CD8-positive, alpha-beta T cell (primary cell): ENCODE measurements at regions of chr6 and their contacts with region 1.

Region 1: DNA sequence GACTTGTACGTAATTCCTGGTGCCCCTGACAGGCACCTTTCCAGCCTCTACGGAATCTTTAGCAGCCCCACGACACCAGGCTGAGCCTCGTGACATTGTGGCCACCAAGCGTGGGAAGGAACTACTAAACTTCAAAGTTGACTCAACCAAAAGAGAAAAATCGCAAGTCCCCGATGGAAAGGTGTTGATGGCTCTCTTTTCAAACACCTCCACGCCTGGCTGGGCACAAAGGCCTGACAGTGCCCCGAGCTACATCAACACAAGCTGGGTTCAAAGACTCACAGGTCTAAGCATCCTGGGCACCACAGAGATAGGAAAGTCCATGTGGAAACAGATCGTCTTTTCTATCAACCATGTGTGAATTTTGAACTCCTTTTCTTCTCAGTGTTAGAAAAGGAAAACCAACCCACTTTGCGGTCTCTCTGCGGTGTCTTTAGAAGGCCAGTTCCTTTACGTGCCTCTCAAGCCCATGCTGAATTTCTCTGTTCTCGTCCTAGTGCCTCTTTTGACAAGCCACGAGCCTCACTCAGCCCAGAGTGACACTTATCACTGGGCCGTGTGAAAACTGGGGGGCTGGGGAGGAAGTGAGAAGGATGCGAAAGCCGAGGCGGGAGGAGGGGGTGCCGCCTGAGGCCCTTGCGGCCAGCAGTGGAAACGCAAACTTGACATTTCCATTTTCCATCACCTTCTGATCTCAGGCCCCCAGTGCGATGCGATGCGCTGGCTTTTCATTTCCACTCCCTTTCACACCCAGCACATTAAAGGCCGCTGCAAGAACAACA is 59.4 kb downstream of the GFOD1 start:
- DNase-seq: peak; percentile 25 to 92 (median 68)
- ATAC-seq: peak; percentile 80
- H3K4me3 ChIP-seq: peak overlapping the region; percentile 1 to 19
- H3K4me3 Mint-ChIP-seq: peak overlapping the region; percentile 70
- H3K27ac ChIP-seq: peak overlapping the region; percentile 8 to 89
- H3K27ac Mint-ChIP-seq: peak overlapping the region; percentile 89
- H3K4me1 ChIP-seq: peaks cover 26% of the 10 kb centered on the region
- H3K4me1 Mint-ChIP-seq: peaks cover 61% of the 10 kb centered on the region
- H3K27me3 ChIP-seq: no peaks in the 10 kb centered on the region
- H3K27me3 Mint-ChIP-seq: no peaks in the 10 kb centered on the region
- CTCF ChIP-seq: peak; percentile 25

Region 2: DNA sequence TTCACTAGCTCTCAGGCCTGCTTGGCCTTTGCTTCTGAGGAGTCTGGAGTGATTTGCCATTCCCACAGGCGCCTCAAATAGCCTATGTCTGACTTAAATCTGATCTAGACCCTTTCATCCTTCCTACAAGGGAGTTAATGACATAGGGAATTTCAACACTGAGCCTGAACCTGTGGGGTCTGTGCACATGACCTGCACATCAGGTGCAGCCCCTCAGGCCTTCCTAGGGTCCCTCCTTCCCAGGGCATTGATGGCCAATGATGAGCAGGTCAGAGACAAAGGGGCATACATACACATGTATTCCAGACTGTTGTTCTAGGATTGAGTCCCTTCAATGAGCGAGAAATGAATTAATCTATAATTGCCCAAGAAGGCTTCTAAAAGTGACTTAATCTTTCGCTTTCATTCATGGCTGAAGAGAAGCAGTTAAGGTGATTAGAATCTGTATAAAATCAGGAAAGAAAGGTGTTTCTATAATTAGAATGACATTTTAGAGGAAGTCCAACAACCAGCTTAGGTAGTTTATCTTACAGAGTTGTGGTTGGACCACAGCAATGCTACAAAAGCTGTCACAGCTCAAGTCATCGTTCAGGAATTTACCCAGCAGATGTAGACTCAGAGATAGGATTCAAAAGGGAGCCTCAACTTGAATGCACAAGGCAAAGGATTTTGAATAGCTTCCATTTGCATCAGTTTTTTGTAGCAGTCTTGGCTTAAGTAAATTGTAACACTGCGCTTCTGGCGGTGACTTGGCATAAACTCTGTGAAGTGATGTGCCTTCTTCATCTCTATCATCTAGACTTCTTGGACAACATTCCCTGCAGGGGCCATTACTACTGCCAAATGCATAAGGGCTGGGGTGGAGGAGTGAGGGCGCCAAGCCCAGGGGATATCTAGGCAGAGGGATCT is 72.7 kb before region 1 on chr6:
- CTCF ChIA-PET with region 1: no interaction called
- POLR2A ChIA-PET with region 1: no interaction called
- intact Hi-C with region 1: loop called in 1 of 2 experiments (anchors 10 kb)
- DNase-seq: peak in 3 of 9 experiments; percentile 16 to 71 (median 49)
- ATAC-seq: peak; percentile 68
- H3K4me3 ChIP-seq: peak overlapping the region; percentile 16 to 22
- H3K4me3 Mint-ChIP-seq: peak overlapping the region; percentile 78
- H3K27ac ChIP-seq: peak overlapping the region; percentile 10 to 50
- H3K27ac Mint-ChIP-seq: peak overlapping the region; percentile 93
- H3K4me1 ChIP-seq: peaks cover 29% of the 10 kb centered on the region
- H3K4me1 Mint-ChIP-seq: peaks cover 41% of the 10 kb centered on the region
- H3K27me3 ChIP-seq: no peaks in the 10 kb centered on the region
- H3K27me3 Mint-ChIP-seq: no peaks in the 10 kb centered on the region
- CTCF ChIP-seq: no peak

Region 3: GRCh38 chr6:13548500-13549210 is 120.7 kb after region 1 on chr6:
- CTCF ChIA-PET with region 1: no interaction called
- POLR2A ChIA-PET with region 1: no interaction called
- intact Hi-C with region 1: no loop called
- DNase-seq: no peak
- ATAC-seq: no peak
- H3K4me3 ChIP-seq: no peak overlapping the region
- H3K4me3 Mint-ChIP-seq: no peak overlapping the region
- H3K27ac ChIP-seq: no peak overlapping the region
- H3K27ac Mint-ChIP-seq: no peak overlapping the region
- H3K4me1 ChIP-seq: no peaks in the 10 kb centered on the region
- H3K4me1 Mint-ChIP-seq: no peaks in the 10 kb centered on the region
- H3K27me3 ChIP-seq: no peaks in the 10 kb centered on the region
- H3K27me3 Mint-ChIP-seq: no peaks in the 10 kb centered on the region
- CTCF ChIP-seq: no peak